Activated B cell treated with CpG ODN at 0.5 μM for 24 hours (primary cell): ENCODE measurements at regions of chr6 and their contacts with region 1.

Region 1: GRCh38 chr6:109382576-109383437 is 540 bp upstream of the CD164 start:
- DNase-seq: peak; percentile 93
- ATAC-seq: peak; percentile 74
- H3K4me3 Mint-ChIP-seq: peak overlapping the region; percentile 97
- H3K27ac Mint-ChIP-seq: peak overlapping the region; percentile 99
- H3K4me1 Mint-ChIP-seq: peaks cover 40% of the 10 kb centered on the region
- H3K27me3 Mint-ChIP-seq: no peaks in the 10 kb centered on the region
- CTCF ChIP-seq: peak; percentile 80

Region 2: GRCh38 chr6:107957909-107958688 is 1424.7 kb before region 1 on chr6 and contains the start of gene SEC63:
- CTCF ChIA-PET with region 1: no interaction called
- POLR2A ChIA-PET with region 1: no interaction called
- intact Hi-C with region 1: loop called (anchors 5 kb)
- DNase-seq: peak; percentile 95
- ATAC-seq: peak; percentile 97
- H3K4me3 Mint-ChIP-seq: peak within 1 kb of the TSS; percentile 98
- H3K27ac Mint-ChIP-seq: peak within 1 kb of the TSS; percentile 94
- H3K4me1 Mint-ChIP-seq: peaks cover 27% of the 10 kb centered on the region
- H3K27me3 Mint-ChIP-seq: no peaks in the 10 kb centered on the region
- CTCF ChIP-seq: no peak
- total RNA-seq, gene SEC63: 64.4 and 68.3 TPM in 2 replicates

Region 3: DNA sequence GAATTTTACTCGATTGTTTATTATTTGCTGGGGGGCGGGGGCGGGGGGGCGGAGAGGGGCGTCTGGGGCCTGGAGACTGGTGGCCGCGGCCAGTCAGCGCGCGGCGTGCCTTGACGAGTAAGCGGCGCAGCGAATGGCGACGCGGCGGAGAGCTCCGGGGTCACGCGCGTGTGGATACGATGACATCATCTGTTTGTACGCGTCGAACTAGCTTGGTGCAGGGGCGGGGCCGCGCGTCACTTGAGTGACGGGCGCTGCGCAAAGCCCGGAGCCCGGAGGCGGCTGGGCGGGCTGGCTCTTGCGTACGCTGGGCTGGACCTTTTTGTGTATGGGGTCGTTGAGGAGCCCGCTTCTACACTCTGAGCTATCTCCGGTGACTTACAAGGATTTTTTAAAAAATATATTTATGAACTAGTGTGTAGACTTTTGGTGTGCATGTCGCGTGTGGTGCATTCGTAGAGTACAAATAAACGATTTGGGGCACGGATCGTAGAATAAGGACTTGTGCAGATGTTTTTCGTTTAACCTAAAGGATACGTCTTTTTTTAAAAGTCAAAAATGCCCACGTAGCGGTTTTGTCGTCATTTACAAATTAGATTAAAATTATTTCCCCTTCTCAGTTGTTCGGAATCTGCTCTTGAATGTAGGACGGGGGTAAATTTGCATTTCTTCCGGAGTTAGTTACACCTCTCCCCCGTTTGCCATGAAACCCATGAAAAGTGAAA is 824.3 kb before region 1 on chr6:
- CTCF ChIA-PET with region 1: no interaction called
- POLR2A ChIA-PET with region 1: interaction called, 12 read pairs
- intact Hi-C with region 1: loop called (anchors 1 kb)
- DNase-seq: peak; percentile 93
- ATAC-seq: peak; percentile 65
- H3K4me3 Mint-ChIP-seq: peak overlapping the region; percentile 95
- H3K27ac Mint-ChIP-seq: peak overlapping the region; percentile 97
- H3K4me1 Mint-ChIP-seq: peaks cover 24% of the 10 kb centered on the region
- H3K27me3 Mint-ChIP-seq: peaks cover 8% of the 10 kb centered on the region
- CTCF ChIP-seq: no peak

Region 4: GRCh38 chr6:109095027-109095834 is 287.6 kb before region 1 on chr6 and contains the start of gene CEP57L1:
- CTCF ChIA-PET with region 1: interaction called, 11 read pairs
- POLR2A ChIA-PET with region 1: interaction called, 39 read pairs
- intact Hi-C with region 1: loop called (anchors 1 kb)
- DNase-seq: peak; percentile 86
- ATAC-seq: peak; percentile 71
- H3K4me3 Mint-ChIP-seq: peak within 1 kb of the TSS; percentile 97
- H3K27ac Mint-ChIP-seq: peak within 1 kb of the TSS; percentile 100
- H3K4me1 Mint-ChIP-seq: peaks cover 46% of the 10 kb centered on the region
- H3K27me3 Mint-ChIP-seq: no peaks in the 10 kb centered on the region
- CTCF ChIP-seq: no peak
- total RNA-seq, gene CEP57L1: 4.7 and 6.1 TPM in 2 replicates

Region 5: DNA sequence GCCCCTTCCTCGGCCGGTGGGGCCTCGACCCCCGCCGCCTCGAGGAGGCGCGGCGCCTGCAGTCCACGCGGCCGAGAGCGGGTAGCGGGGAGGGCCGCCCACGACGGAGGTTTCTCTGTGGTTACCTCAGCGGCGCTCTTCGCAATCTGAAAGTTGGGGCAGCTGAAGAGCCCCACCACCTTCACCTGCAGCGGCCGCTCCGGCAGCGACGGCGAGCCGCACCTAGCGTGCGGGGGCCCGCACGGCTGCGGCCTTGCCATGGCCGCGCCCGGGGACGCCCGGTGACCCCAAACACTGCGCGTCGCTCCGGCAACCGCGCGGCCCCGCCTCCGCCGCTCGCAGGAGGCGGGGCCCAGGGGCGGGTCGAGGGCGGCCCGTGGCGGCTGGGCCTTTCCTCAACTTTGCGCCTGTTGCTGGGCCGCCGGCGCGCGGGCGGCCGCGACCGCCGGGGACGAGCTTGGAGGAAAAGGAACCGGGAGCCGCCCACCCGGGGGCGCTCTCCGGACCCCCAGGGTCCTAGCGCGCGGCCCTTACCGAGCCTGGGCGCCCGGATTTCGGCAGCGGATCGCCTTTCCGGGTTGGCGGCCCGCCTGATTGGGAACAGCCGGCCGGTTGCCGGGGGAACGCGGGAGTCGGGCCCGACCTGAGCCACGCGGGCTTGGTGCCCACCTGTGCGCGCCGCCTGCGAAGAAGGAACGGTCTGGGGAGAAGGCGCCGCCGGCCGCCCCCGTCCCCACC is 57.7 kb after region 1 on chr6 and contains the starts of genes PPIL6 and SMPD2:
- CTCF ChIA-PET with region 1: interaction called, 13 read pairs
- POLR2A ChIA-PET with region 1: interaction called, 78 read pairs
- intact Hi-C with region 1: loop called (anchors 1 kb)
- DNase-seq: peak; percentile 89
- ATAC-seq: peak; percentile 83
- H3K4me3 Mint-ChIP-seq: peak within 1 kb of the TSS; percentile 96
- H3K27ac Mint-ChIP-seq: peak within 1 kb of the TSS; percentile 95
- H3K4me1 Mint-ChIP-seq: peaks cover 34% of the 10 kb centered on the region
- H3K27me3 Mint-ChIP-seq: no peaks in the 10 kb centered on the region
- CTCF ChIP-seq: no peak
- total RNA-seq, gene PPIL6: 0.73 and 0.91 TPM in 2 replicates
- total RNA-seq, gene SMPD2: 24.9 and 28.2 TPM in 2 replicates

Region 6: DNA sequence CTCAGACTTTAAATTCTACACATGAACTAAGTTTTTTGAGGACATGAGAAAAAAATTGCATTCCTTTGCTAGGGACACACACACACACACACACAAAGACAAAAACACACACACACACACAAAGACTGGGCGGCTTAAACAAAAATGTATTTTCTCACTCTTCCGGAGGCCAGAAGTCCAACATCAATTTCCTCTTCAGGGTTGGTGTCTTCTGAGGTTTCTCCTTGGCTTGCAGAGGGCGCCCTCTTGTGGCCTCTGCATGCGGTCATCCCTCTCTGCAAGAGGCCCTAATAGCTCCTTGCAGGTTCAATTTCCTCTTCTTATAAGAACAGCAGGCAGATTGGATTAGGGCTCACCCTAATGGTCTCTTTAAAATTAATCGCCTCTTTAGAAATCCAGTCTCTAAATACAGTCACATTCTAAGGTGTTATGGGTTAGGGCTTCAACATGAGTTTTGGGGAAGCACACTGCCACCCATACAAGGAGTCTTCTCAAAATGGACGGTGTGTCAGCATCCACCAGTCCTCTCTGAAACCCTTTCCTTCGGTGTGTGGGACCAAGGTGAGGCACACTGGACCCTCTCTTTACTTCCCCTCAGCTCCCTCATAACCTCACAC is 656.7 kb after region 1 on chr6:
- CTCF ChIA-PET with region 1: interaction called, 4 read pairs
- POLR2A ChIA-PET with region 1: no interaction called
- intact Hi-C with region 1: loop called (anchors 1 kb)
- DNase-seq: peak; percentile 75
- ATAC-seq: peak; percentile 87
- H3K4me3 Mint-ChIP-seq: peak overlapping the region; percentile 89
- H3K27ac Mint-ChIP-seq: peak overlapping the region; percentile 91
- H3K4me1 Mint-ChIP-seq: peaks cover 24% of the 10 kb centered on the region
- H3K27me3 Mint-ChIP-seq: no peaks in the 10 kb centered on the region
- CTCF ChIP-seq: no peak